Activated CD8-positive, alpha-beta memory T cell treated with anti-CD3 and anti-CD28 coated beads, Interleukin-2, amount 10 ng/mL, durations not matched to agents 7 days and 5 days (primary cell): ENCODE measurements at regions of chr12 and their contacts with region 1.

Region 1: GRCh38 chr12:65169320-65170208 is at the start of gene LEMD3:
- DNase-seq: peak; percentile 95
- ATAC-seq: peak; percentile 90
- H3K4me3 Mint-ChIP-seq: peak within 1 kb of the TSS; percentile 85
- H3K27ac Mint-ChIP-seq: peak within 1 kb of the TSS; percentile 93
- H3K4me1 Mint-ChIP-seq: peaks cover 30% of the 10 kb centered on the region
- H3K27me3 Mint-ChIP-seq: no peaks in the 10 kb centered on the region
- total RNA-seq, gene LEMD3: 28.2 to 37.3 TPM

Region 2: DNA sequence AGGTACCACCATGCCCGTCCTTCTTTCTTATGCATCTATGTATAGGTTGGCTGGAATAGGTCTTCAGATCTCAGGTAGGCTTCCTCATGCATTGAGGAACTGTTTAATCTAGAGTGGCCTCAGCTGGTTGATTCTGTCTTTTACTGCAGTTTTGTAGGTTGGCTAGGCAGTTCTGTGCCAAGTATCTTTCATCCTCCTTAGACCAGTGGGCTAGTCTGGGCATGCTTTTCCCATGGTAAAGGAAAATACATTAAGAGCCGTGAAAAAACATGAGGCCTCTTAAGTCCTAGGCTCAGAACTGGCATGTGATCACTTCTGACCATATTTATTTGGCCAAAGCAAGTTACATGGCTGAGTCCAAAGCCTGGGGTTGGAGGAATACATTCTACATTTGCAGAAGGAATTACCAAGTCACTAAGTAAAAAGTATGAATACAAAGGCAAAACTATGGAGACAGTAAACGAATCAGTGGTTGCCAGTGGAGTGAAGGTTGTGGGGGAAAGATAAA is 185.7 kb before region 1 on chr12:
- CTCF ChIA-PET with region 1: no interaction called
- DNase-seq: no peak
- ATAC-seq: no peak
- H3K4me3 Mint-ChIP-seq: no peak overlapping the region
- H3K27ac Mint-ChIP-seq: no peak overlapping the region
- H3K4me1 Mint-ChIP-seq: no peaks in the 10 kb centered on the region
- H3K27me3 Mint-ChIP-seq: peaks cover 5% of the 10 kb centered on the region

Region 3: GRCh38 chr12:65156366-65156841 is 13.2 kb before region 1 on chr12:
- CTCF ChIA-PET with region 1: interaction called, 41 read pairs
- DNase-seq: peak; percentile 54
- ATAC-seq: peak; percentile 93
- H3K4me3 Mint-ChIP-seq: peak overlapping the region; percentile 66
- H3K27ac Mint-ChIP-seq: peak overlapping the region; percentile 93
- H3K4me1 Mint-ChIP-seq: peaks cover 20% of the 10 kb centered on the region
- H3K27me3 Mint-ChIP-seq: peaks cover 7% of the 10 kb centered on the region

Region 4: GRCh38 chr12:65182012-65182739 is 12.6 kb after region 1 on chr12:
- CTCF ChIA-PET with region 1: interaction called, 13 read pairs
- DNase-seq: no peak
- ATAC-seq: no peak
- H3K4me3 Mint-ChIP-seq: no peak overlapping the region
- H3K27ac Mint-ChIP-seq: no peak overlapping the region
- H3K4me1 Mint-ChIP-seq: peaks cover 39% of the 10 kb centered on the region
- H3K27me3 Mint-ChIP-seq: no peaks in the 10 kb centered on the region

Region 5: DNA sequence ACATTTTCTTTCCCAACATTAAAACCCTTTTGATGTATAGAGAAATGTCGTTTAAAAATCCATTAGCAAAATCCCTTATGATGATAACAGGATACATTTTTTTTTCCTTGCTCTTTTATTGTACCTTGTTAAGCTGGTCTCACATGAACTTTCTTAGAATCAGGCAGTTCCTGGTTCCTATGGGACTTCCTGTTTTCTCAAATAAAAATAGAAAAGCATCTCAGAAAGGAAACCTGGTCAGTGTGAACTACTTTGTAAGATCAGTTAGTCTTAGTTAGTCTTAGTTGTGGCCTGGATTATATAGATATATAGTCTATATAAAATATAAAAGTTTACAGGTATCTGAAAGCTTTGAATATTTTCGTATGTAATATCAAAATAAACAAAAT is 40.1 kb after region 1 on chr12:
- CTCF ChIA-PET with region 1: interaction called, 11 read pairs
- DNase-seq: no peak
- ATAC-seq: peak; percentile 51
- H3K4me3 Mint-ChIP-seq: peak overlapping the region; percentile 62
- H3K27ac Mint-ChIP-seq: peak overlapping the region; percentile 90
- H3K4me1 Mint-ChIP-seq: peaks cover 42% of the 10 kb centered on the region
- H3K27me3 Mint-ChIP-seq: no peaks in the 10 kb centered on the region

Region 6: GRCh38 chr12:65232476-65233077 is 63.0 kb after region 1 on chr12:
- CTCF ChIA-PET with region 1: interaction called, 18 read pairs
- DNase-seq: no peak
- ATAC-seq: no peak
- H3K4me3 Mint-ChIP-seq: no peak overlapping the region
- H3K27ac Mint-ChIP-seq: no peak overlapping the region
- H3K4me1 Mint-ChIP-seq: peaks cover 7% of the 10 kb centered on the region
- H3K27me3 Mint-ChIP-seq: no peaks in the 10 kb centered on the region